Activated naive CD4-positive, alpha-beta T cell treated with anti-CD3 and anti-CD28 coated beads, Interleukin-2, amount 10 ng/mL, durations not matched to agents 7 days and 5 days (primary cell): ENCODE measurements at regions of chr7 and their contacts with region 1.

Region 1: GRCh38 chr7:35694781-35695472 is at the start of gene HERPUD2:
- DNase-seq: peak; percentile 94
- H3K4me3 Mint-ChIP-seq: peak within 1 kb of the TSS; percentile 99
- H3K27ac Mint-ChIP-seq: peak within 1 kb of the TSS; percentile 99
- H3K4me1 Mint-ChIP-seq: peaks cover 59% of the 10 kb centered on the region
- H3K27me3 Mint-ChIP-seq: no peaks in the 10 kb centered on the region

Region 2: GRCh38 chr7:35707422-35707821 is 12.5 kb after region 1 on chr7:
- CTCF ChIA-PET with region 1: interaction called, 16 read pairs
- DNase-seq: no peak
- H3K4me3 Mint-ChIP-seq: no peak overlapping the region
- H3K27ac Mint-ChIP-seq: no peak overlapping the region
- H3K4me1 Mint-ChIP-seq: peaks cover 32% of the 10 kb centered on the region
- H3K27me3 Mint-ChIP-seq: peaks cover 13% of the 10 kb centered on the region

Region 3: DNA sequence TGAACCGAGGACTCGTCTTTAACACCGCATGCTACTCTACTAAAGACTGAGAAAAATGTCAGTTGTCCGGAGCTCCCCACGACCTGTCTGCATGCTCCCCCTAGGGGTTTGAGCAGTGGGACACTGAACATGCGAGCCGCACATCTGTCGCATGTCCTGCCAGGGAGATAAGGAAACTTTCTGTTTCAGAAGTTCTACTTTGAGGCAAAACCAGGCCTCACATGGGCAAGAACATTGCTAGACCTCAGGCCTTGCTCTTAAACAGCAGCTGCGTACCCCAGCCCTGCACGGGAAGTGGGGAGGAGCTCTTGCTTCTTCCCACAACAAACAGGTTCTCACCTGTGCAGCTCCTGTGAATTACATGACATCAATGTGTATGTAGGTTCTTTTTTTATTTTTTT is 30.4 kb after region 1 on chr7:
- CTCF ChIA-PET with region 1: interaction called, 16 read pairs
- DNase-seq: peak; percentile 79
- H3K4me3 Mint-ChIP-seq: peak overlapping the region; percentile 9
- H3K27ac Mint-ChIP-seq: peak overlapping the region; percentile 86
- H3K4me1 Mint-ChIP-seq: peaks cover 56% of the 10 kb centered on the region
- H3K27me3 Mint-ChIP-seq: peaks cover 1% of the 10 kb centered on the region